Cardiac septum (tissue), 1 donor: ENCODE measurements at regions of chr10 and their contacts with region 1.

Region 1: GRCh38 chr10:29131952-29132820 is 156.7 kb upstream of the LYZL1 start:
- DNase-seq: no peak

Region 2: GRCh38 chr10:28991326-28992270 is 140.6 kb before region 1 on chr10:
- intact Hi-C with region 1: loop called (anchors 10 kb)
- DNase-seq: no peak

Region 3: DNA sequence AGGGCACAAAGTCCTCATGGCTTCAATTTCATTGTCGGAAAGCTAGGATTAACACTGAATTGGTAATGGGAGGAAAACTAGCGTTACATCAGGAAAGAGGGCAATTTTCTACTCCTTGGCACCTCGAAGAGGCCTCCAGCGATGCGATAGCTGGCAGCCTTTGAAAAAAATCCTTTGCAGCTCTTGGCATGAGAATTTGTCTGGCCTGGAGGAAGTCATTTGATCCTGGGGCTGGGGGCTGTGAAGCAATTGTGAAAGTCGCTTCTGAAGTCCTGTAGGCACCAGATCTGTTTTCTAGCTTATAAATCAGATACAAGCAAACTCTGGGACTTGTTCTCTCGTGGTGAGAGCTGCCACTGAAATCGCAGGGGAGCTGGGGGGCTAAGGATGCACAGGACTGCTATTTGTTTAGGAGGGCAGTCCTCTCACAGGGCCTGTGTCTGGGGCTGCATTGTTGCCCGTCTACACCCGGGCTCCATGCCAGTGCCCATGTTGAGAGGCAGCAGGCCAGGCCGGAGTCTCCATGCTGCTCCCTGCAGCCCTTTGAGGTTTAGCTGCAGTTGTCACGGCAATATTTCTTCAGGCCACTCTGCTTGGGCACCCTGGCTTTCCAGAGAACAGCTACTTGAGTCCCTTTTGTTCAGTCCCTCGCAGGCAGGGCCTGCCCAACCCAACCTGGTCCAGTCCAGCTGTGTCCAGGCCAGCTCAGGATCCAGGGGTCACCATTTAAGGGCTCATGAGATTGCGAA is 50.1 kb before region 1 on chr10:
- intact Hi-C with region 1: no loop called
- DNase-seq: no peak